ENCODE measurements at regions of chr1 and their contacts with region 1.

Region 1: DNA sequence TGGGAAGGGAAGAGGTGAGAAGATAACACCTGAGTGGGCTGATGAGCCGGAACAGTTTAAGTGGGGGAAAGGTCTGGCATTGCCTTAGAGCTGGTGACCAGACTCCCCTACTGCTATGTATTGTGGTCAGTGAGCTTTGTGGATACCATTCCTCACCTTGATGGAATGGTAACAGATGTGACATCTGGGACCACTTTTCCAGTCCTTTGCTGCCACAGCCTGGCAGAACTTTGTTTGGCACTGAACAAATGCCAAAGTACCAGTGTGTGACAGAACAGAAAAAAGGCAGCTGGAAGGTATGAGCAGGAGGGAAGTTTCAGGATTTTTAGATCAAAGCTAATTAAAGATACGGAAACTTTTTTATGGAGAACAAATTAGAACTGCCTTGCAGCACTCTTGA is 6.2 kb downstream of the MED8 start:
- DNase-seq: no peak
- CTCF ChIP-seq: peak; percentile 16

Region 2: DNA sequence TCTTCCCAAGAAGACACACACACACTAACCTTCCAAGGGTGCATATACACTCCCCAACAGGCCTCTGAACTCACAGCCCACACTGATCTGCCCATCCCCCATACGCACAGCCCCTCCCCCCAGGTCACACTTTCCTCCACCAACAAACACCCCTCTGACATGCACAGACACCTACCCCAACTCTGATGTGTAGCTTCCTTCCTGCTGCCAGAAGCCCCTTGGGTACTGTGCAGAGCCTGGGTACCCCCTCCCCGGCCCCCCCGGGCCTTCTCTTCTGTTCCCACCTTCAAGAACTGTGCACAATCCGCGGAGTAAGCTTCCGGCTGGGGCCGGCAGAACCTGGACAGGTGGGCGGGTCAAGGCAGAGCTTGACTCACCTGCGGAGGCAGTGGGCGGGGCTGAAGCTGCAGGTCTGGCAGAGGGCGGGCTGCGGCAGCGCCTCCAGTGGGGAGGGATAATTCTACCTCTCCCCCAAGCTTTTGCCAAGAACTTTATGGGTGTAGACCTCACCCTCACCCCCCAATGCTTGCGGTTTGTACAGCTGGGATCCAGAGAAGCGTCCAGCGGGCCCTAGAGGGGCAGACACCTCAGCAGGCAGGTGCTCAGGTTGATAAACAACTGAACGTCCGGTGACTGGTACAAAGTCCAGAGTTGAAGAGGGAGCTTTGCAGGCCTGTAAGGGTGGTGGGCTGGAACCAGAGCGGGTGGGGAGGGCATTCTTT is 98.0 kb before region 1 on chr1 and contains the start of gene C1orf210:
- CTCF ChIA-PET with region 1: no interaction called
- POLR2A ChIA-PET with region 1: no interaction called
- DNase-seq: no peak
- CTCF ChIP-seq: no peak

Region 3: GRCh38 chr1:43367904-43368645 is 15.4 kb before region 1 on chr1 and contains the start of gene ELOVL1:
- CTCF ChIA-PET with region 1: interaction called, 10 read pairs
- POLR2A ChIA-PET with region 1: interaction called, 6 read pairs
- DNase-seq: peak; percentile 97
- CTCF ChIP-seq: peak; percentile 24

Measured in GM10248 (cell line).